ENCODE measurements at regions of chrX and their contacts with region 1.

Region 1: DNA sequence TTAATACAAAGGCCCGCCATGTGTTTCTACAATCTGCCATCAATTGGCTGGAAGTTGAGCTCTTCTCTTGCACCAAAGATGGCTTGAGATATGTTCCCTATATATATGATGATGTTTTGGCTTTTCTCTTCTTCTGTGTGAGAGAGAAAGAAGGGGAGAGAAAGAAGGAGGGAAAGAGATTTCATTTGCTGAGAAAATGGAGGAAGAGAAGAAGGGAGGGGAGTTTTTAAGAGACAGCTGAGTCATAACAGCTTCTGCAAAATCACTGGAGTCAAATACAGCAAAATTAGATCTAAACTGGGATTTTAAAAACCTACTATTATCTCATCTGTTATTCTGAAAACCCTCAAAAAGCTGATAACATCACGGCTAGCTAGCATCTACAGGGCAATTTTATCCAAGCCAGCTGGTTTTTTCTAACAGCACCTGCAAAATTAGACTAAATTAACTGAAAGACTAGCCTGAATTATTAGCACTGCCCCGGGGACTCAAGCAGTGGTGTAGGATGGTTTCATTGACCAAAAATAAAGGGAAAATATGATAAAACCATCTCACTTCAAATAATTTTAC is 647.6 kb upstream of the ACTRT1 start:
- DNase-seq: no peak
- ATAC-seq: no peak
- H3K4me3 ChIP-seq: no peak overlapping the region
- H3K27ac ChIP-seq: no peak overlapping the region
- H3K4me1 ChIP-seq: no peaks in the 10 kb centered on the region
- H3K27me3 ChIP-seq: no peaks in the 10 kb centered on the region
- CTCF ChIP-seq: no peak

Region 2: DNA sequence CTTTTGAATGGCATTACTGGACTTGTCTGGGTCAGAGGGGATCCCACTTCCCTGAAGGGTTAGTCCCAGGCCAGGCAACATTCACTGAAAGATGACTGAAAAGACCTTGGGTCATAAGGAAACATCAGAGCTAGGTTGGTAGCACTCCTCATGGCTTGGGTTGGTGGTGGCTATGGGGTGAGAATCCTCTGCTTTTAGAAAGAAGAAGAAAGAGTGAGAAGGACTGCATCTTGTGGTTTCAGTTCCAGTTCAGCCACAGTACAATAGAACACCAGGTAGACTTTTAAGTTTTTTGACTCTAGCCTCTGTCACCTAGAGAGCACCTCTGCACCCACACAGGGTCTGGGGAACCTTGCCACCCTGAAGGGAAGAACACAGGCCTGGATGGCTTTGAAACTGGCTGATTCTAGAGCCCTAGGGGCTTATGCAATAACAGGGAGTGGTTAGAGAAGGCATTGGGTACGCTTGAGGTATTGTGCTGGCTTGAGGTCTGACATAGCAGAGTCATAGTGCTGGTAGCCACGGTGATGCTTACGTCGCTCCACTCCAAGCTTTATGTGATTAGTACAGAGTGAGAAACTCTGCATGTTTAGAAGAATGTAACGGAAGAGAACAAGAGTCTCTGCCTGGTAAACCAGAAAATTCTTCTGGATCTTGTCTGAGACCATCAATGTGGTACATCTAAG is 1843.8 kb before region 1 on chrX:
- intact Hi-C with region 1: loop called in 1 of 10 experiments (anchors 5 kb)
- DNase-seq: no peak
- ATAC-seq: no peak
- H3K4me3 ChIP-seq: no peak overlapping the region
- H3K27ac ChIP-seq: no peak overlapping the region
- H3K4me1 ChIP-seq: no peaks in the 10 kb centered on the region
- H3K27me3 ChIP-seq: no peaks in the 10 kb centered on the region
- CTCF ChIP-seq: no peak